Activated CD4-positive, alpha-beta memory T cell treated with anti-CD3 and anti-CD28 coated beads, Interleukin-2, amount 10 ng/mL, durations not matched to agents 7 days and 5 days (primary cell): ENCODE measurements at regions of chr10 and their contacts with region 1.

Region 1: DNA sequence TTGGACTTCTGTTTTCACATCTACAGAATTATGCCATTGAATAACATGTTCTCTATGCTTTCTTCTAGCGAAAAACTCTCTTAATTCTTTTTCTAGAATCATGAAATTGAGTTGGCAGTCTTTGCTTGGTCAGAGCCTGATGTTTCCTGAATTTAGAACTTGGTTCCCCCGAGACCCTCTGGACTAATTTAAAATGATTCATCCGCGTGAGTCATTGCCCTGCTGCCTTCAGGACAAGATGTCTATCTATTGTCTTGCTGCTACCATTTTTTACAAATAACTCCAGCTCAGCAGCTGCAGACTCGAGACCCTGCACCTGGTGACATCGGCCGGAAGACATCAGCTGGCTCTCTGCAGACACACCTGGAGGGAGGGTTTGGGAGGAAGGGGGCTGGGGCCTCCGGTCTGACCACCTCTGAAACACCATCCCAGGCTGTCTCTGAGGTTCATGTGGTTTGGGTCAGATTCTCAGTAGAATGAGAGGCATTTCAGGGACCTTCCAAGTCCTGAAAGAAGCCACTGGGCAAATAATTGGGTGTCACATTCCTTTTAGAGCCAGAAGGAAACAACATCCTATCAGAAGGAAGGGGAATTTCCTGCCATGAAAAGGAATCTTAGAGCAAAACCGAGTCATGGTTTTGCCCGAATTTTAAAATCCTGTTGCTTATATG is 20.9 kb upstream of the KLF6 start:
- DNase-seq: peak; percentile 69
- H3K4me3 Mint-ChIP-seq: peak overlapping the region; percentile 67
- H3K27ac Mint-ChIP-seq: no peak overlapping the region
- H3K4me1 Mint-ChIP-seq: peaks cover 63% of the 10 kb centered on the region
- H3K27me3 Mint-ChIP-seq: no peaks in the 10 kb centered on the region

Region 2: GRCh38 chr10:3729397-3729976 is 76.4 kb before region 1 on chr10:
- CTCF ChIA-PET with region 1: no interaction called
- POLR2A ChIA-PET with region 1: no interaction called
- DNase-seq: no peak
- H3K4me3 Mint-ChIP-seq: no peak overlapping the region
- H3K27ac Mint-ChIP-seq: no peak overlapping the region
- H3K4me1 Mint-ChIP-seq: peaks cover 7% of the 10 kb centered on the region
- H3K27me3 Mint-ChIP-seq: peaks cover 16% of the 10 kb centered on the region

Region 3: GRCh38 chr10:3852147-3852904 is 46.4 kb after region 1 on chr10:
- CTCF ChIA-PET with region 1: no interaction called
- POLR2A ChIA-PET with region 1: interaction called, 40 read pairs
- DNase-seq: peak; percentile 76
- H3K4me3 Mint-ChIP-seq: peak overlapping the region; percentile 15
- H3K27ac Mint-ChIP-seq: peak overlapping the region; percentile 75
- H3K4me1 Mint-ChIP-seq: peaks cover 36% of the 10 kb centered on the region
- H3K27me3 Mint-ChIP-seq: no peaks in the 10 kb centered on the region

Region 4: GRCh38 chr10:3873728-3874461 is 68.0 kb after region 1 on chr10:
- CTCF ChIA-PET with region 1: no interaction called
- POLR2A ChIA-PET with region 1: interaction called, 43 read pairs
- DNase-seq: no peak
- H3K4me3 Mint-ChIP-seq: no peak overlapping the region
- H3K27ac Mint-ChIP-seq: peak overlapping the region; percentile 33
- H3K4me1 Mint-ChIP-seq: peaks cover 61% of the 10 kb centered on the region
- H3K27me3 Mint-ChIP-seq: no peaks in the 10 kb centered on the region

Region 5: GRCh38 chr10:3948843-3949242 is 142.9 kb after region 1 on chr10:
- CTCF ChIA-PET with region 1: no interaction called
- POLR2A ChIA-PET with region 1: interaction called, 45 read pairs
- DNase-seq: peak; percentile 85
- H3K4me3 Mint-ChIP-seq: peak overlapping the region; percentile 70
- H3K27ac Mint-ChIP-seq: peak overlapping the region; percentile 90
- H3K4me1 Mint-ChIP-seq: peaks cover 73% of the 10 kb centered on the region
- H3K27me3 Mint-ChIP-seq: no peaks in the 10 kb centered on the region

Region 6: DNA sequence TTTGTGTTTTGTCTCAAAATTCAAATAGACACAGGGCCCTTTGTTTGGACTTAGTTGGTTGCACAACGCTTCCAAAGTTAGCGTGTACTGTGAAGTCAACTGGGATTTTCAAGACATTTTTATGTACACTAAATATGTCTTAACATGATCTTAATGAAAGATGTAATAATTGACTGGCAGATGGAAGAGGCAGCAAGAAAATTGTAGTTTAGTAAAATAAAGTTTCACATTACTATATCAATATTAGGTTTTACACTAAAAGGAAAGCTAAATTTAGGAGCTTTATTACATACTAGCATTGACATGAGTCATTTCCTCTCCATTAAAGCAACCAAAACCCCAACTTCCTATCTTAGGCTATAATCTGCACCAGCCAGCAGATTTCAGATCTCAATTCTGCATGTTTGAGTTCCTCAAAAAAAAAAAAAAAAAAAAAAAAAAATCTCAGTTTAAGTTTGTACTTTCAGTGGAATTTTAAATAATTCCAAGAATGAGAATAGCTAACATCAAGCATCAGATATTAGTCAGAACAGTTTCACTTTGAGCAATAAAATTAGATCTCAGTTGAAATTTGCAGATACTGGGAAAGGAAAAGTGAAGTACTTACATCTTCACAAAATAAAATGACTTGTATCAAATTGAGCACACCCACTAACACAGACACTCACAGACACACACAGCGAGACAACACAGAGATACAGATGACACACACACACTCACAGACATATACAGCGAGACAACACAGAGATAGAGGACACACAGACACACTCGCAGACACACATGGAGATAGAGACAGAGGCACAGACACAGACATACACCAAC is 325.7 kb after region 1 on chr10:
- CTCF ChIA-PET with region 1: no interaction called
- POLR2A ChIA-PET with region 1: interaction called, 23 read pairs
- DNase-seq: peak; percentile 63
- H3K4me3 Mint-ChIP-seq: no peak overlapping the region
- H3K27ac Mint-ChIP-seq: no peak overlapping the region
- H3K4me1 Mint-ChIP-seq: peaks cover 41% of the 10 kb centered on the region
- H3K27me3 Mint-ChIP-seq: no peaks in the 10 kb centered on the region